ENCODE measurements at regions of chr19 and their contacts with region 1.

Region 1: GRCh38 chr19:588093-588740 is 1.5 kb upstream of the HCN2 start:
- DNase-seq: peak; percentile 84
- ATAC-seq: peak; percentile 80
- H3K4me3 Mint-ChIP-seq: no peak overlapping the region
- H3K27ac Mint-ChIP-seq: no peak overlapping the region
- H3K4me1 Mint-ChIP-seq: peaks cover 5% of the 10 kb centered on the region
- H3K27me3 Mint-ChIP-seq: peaks cover 21% of the 10 kb centered on the region
- CTCF ChIP-seq: peak; percentile 58

Region 2: GRCh38 chr19:572140-572742 is 16.0 kb before region 1 on chr19 and contains the start of gene BSG:
- CTCF ChIA-PET with region 1: interaction called, 12 read pairs
- POLR2A ChIA-PET with region 1: interaction called, 8 read pairs
- intact Hi-C with region 1: no loop called
- DNase-seq: peak; percentile 99
- ATAC-seq: peak; percentile 86
- H3K4me3 Mint-ChIP-seq: peak within 1 kb of the TSS; percentile 87
- H3K27ac Mint-ChIP-seq: peak within 1 kb of the TSS; percentile 95
- H3K4me1 Mint-ChIP-seq: peaks cover 39% of the 10 kb centered on the region
- H3K27me3 Mint-ChIP-seq: no peaks in the 10 kb centered on the region
- CTCF ChIP-seq: no peak
- total RNA-seq, gene BSG: 159 to 160 TPM

Region 3: DNA sequence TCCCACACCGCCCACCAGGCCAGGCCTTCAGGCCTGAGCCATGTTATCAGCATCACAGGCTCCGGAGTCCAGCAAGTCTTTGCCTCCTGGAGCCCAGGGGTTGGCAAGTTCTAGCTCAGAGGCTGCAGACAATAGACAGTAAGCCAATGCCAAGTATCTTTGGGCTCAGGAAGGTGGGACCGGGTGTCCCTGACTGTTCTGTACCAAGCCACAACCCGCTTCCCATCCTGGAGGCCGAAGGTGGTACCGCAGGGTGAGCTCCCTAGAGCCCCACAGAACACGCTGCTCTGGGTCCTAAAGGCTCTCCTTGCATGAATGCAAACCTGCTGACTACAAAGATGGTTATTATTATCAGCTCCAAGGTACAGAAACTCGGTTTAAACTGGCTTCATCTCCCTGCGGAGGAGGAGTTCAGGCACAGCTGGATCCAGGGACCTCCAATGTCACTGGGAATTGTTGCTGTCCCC is 82.4 kb after region 1 on chr19:
- CTCF ChIA-PET with region 1: no interaction called
- POLR2A ChIA-PET with region 1: no interaction called
- intact Hi-C with region 1: no loop called
- DNase-seq: peak; percentile 35
- ATAC-seq: no peak
- H3K4me3 Mint-ChIP-seq: no peak overlapping the region
- H3K27ac Mint-ChIP-seq: no peak overlapping the region
- H3K4me1 Mint-ChIP-seq: peaks cover 2% of the 10 kb centered on the region
- H3K27me3 Mint-ChIP-seq: peaks cover 21% of the 10 kb centered on the region
- CTCF ChIP-seq: no peak

Measured in activated CD8-positive, alpha-beta T cell treated with anti-CD3 and anti-CD28 coated beads for 36 hours (primary cell).